Caco-2 (cell line): ENCODE measurements at regions of chr1 and their contacts with region 1.

Region 1: DNA sequence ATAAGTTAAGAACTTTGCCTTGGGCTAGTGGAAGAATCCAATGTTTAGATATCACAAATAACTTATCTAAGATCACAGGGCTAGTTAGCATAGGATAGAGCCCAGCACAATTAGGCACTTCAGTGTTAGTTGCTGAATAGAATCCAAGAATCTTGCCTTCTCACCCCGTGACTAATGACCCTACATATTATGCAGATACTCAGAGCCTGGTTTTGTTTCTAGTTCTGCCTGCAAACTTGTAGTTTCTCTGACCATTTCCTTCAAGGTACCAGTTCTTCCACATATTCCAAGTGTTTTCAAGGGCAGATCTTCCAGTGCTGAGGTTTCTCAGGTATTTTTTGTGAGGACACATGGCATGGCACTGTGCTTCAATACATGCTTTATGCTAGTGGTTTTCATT is 239.3 kb downstream of the KCNK2 start:
- DNase-seq: no peak
- H3K4me3 ChIP-seq: no peak overlapping the region
- H3K4me3 Mint-ChIP-seq: no peak overlapping the region
- H3K27ac Mint-ChIP-seq: no peak overlapping the region
- H3K4me1 ChIP-seq: no peaks in the 10 kb centered on the region
- H3K4me1 Mint-ChIP-seq: no peaks in the 10 kb centered on the region
- H3K27me3 ChIP-seq: no peaks in the 10 kb centered on the region
- H3K27me3 Mint-ChIP-seq: peaks cover 4% of the 10 kb centered on the region
- CTCF ChIP-seq: no peak

Region 2: DNA sequence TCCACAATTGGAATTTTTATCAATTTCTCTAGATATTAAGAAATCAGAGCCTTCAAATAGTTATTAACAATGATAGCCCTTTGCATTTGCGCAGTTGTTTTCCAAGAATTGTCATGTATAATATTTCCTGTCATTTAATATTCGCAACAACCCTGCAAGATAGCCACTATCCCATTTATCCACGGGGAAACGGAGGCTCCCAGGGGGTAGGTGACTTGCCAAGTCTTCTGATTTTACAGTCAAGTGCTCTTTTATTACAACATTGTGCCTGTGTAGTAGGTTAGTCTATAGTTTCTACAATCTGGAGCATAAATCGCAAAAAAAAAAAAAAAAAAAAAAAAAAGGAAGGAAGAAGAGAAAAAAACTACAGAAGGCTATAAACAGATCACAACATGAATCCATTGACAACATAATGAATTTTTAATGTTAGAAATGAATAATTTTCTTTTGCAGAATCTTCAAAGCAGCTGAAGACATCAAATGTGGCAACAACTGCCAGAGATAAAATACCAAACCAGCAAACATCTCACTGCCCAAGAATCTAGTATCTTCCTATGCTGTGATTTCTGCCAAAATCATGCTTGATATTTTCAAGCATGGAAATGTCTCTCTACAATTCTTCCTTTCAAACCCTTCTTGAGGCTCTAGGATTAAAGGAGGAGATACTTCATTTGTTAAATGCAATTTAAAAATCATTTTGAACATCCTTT is 895.9 kb before region 1 on chr1:
- CTCF ChIA-PET with region 1: no interaction called
- POLR2A ChIA-PET with region 1: interaction called, 13 read pairs
- intact Hi-C with region 1: no loop called
- DNase-seq: no peak
- H3K4me3 ChIP-seq: no peak overlapping the region
- H3K4me3 Mint-ChIP-seq: no peak overlapping the region
- H3K27ac Mint-ChIP-seq: no peak overlapping the region
- H3K4me1 ChIP-seq: peaks cover 14% of the 10 kb centered on the region
- H3K4me1 Mint-ChIP-seq: peaks cover 51% of the 10 kb centered on the region
- H3K27me3 ChIP-seq: no peaks in the 10 kb centered on the region
- H3K27me3 Mint-ChIP-seq: no peaks in the 10 kb centered on the region
- CTCF ChIP-seq: no peak